ENCODE measurements at regions of chr2 and their contacts with region 1.

Region 1: GRCh38 chr2:200811336-200812121 is at the start of gene BZW1:
- DNase-seq: peak; percentile 98
- ATAC-seq: peak; percentile 79
- H3K4me3 Mint-ChIP-seq: peak within 1 kb of the TSS; percentile 87
- H3K27ac Mint-ChIP-seq: peak within 1 kb of the TSS; percentile 96
- H3K4me1 Mint-ChIP-seq: peaks cover 45% of the 10 kb centered on the region
- H3K27me3 Mint-ChIP-seq: no peaks in the 10 kb centered on the region
- total RNA-seq, gene BZW1: 413 to 474 TPM

Region 2: DNA sequence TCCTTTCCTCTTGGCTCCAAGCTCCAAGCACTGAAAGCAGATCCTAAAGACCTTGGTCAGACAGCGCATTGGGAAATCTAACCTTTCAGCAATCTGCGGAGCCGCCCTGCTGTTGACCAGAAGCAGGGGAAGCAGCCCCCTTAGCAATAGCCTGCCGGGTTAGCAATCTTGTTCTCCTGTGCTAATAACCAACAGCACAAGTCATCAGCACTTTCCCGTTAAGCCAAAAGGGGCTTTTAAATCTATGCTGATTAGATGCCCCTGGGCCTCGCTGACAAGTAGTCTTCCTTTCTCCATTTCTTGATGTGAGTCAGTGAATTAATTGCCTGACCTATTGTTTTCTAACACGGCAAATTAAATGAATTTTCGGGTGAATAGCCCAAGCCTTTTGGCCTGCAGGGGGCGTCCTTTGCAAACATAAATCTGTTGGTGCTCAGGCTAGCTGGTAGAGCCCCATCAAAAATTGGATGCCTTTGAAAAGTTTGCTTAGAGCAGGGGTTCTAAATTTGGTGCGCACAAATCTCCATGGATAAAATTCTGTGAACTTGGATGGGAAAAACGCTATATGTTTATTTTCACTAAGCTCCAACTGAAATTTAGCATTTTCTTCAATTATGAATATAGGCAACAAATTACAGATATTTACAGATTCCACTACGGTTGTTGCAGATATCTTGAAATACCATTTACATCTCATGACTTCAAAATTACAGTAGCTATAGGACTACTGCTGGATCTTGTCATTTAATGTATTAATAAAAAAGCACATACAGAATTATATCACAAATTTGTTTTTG is 831.5 kb before region 1 on chr2:
- CTCF ChIA-PET with region 1: no interaction called
- POLR2A ChIA-PET with region 1: no interaction called
- intact Hi-C with region 1: loop called in 1 of 2 experiments (anchors 2 kb)
- DNase-seq: peak; percentile 91
- ATAC-seq: no peak
- H3K4me3 Mint-ChIP-seq: no peak overlapping the region
- H3K27ac Mint-ChIP-seq: no peak overlapping the region
- H3K4me1 Mint-ChIP-seq: peaks cover 21% of the 10 kb centered on the region
- H3K27me3 Mint-ChIP-seq: no peaks in the 10 kb centered on the region

Region 3: GRCh38 chr2:200703127-200703925 is 108.2 kb before region 1 on chr2:
- CTCF ChIA-PET with region 1: interaction called, 4 read pairs
- POLR2A ChIA-PET with region 1: interaction called, 3 read pairs
- intact Hi-C with region 1: loop called (anchors 1 to 2 kb)
- DNase-seq: peak; percentile 61
- ATAC-seq: peak; percentile 85
- H3K4me3 Mint-ChIP-seq: peak overlapping the region; percentile 37
- H3K27ac Mint-ChIP-seq: peak overlapping the region; percentile 88
- H3K4me1 Mint-ChIP-seq: peaks cover 62% of the 10 kb centered on the region
- H3K27me3 Mint-ChIP-seq: peaks cover 1% of the 10 kb centered on the region

Region 4: GRCh38 chr2:200864176-200864976 is 52.8 kb after region 1 on chr2 and contains the start of gene CLK1:
- CTCF ChIA-PET with region 1: interaction called, 10 read pairs
- POLR2A ChIA-PET with region 1: interaction called, 14 read pairs
- intact Hi-C with region 1: loop called (anchors 1 kb)
- DNase-seq: peak; percentile 98
- ATAC-seq: peak; percentile 77
- H3K4me3 Mint-ChIP-seq: peak within 1 kb of the TSS; percentile 87
- H3K27ac Mint-ChIP-seq: peak within 1 kb of the TSS; percentile 99
- H3K4me1 Mint-ChIP-seq: peaks cover 26% of the 10 kb centered on the region
- H3K27me3 Mint-ChIP-seq: no peaks in the 10 kb centered on the region
- total RNA-seq, gene CLK1: 86.4 to 99.3 TPM

Region 5: GRCh38 chr2:201064797-201065329 is 253.3 kb after region 1 on chr2:
- CTCF ChIA-PET with region 1: no interaction called
- POLR2A ChIA-PET with region 1: no interaction called
- intact Hi-C with region 1: loop called in 1 of 2 experiments (anchors 5 kb)
- DNase-seq: no peak
- ATAC-seq: no peak
- H3K4me3 Mint-ChIP-seq: no peak overlapping the region
- H3K27ac Mint-ChIP-seq: no peak overlapping the region
- H3K4me1 Mint-ChIP-seq: peaks cover 63% of the 10 kb centered on the region
- H3K27me3 Mint-ChIP-seq: no peaks in the 10 kb centered on the region

Region 6: DNA sequence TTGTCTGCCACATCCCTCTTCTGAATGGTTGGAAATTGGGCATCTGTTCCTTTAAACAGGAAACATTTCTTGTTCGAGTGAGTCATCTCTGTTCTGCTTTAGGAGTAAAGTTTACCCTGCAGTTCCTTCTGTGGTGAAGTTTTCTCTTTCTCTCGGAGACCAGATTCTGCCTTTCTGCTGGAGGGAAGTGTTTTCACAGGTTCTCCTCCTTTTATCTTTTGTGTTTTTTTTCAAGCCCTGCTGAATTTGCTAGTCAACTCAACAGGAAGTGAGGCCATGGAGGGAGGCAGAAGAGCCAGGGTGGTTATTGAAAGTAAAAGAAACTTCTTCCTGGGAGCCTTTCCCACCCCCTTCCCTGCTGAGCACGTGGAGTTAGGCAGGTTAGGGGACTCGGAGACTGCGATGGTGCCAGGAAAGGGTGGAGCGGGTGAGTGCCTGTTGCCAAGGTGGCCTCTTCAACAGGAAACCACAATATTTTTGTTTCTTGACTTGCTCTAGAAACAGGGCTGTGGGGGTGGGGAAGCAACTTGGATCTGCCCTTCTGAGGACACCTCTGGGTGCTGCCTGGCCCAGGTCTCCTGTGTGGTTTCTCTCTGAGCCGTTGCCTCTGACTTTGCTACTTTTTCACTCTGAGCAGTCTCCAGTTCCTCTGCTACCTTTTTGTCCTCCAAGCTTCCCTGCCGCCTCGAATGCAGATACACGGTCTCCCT is 446.6 kb after region 1 on chr2:
- CTCF ChIA-PET with region 1: interaction called, 3 read pairs
- POLR2A ChIA-PET with region 1: no interaction called
- intact Hi-C with region 1: loop called in 1 of 2 experiments (anchors 5 kb)
- DNase-seq: peak; percentile 96
- ATAC-seq: peak; percentile 66
- H3K4me3 Mint-ChIP-seq: peak overlapping the region; percentile 79
- H3K27ac Mint-ChIP-seq: peak overlapping the region; percentile 98
- H3K4me1 Mint-ChIP-seq: peaks cover 76% of the 10 kb centered on the region
- H3K27me3 Mint-ChIP-seq: no peaks in the 10 kb centered on the region

Region 7: GRCh38 chr2:202265467-202266277 is 1454.1 kb after region 1 on chr2 and contains the start of gene NOP58:
- CTCF ChIA-PET with region 1: no interaction called
- POLR2A ChIA-PET with region 1: no interaction called
- intact Hi-C with region 1: loop called in 1 of 2 experiments (anchors 5 kb)
- DNase-seq: peak; percentile 95
- ATAC-seq: peak; percentile 84
- H3K4me3 Mint-ChIP-seq: no peak within 1 kb of the TSS
- H3K27ac Mint-ChIP-seq: peak within 1 kb of the TSS; percentile 78
- H3K4me1 Mint-ChIP-seq: peaks cover 15% of the 10 kb centered on the region
- H3K27me3 Mint-ChIP-seq: no peaks in the 10 kb centered on the region
- total RNA-seq, gene NOP58: 160 to 180 TPM